OCI-LY7 (cell line): ENCODE measurements at regions of chr2 and their contacts with region 1.

Region 1: DNA sequence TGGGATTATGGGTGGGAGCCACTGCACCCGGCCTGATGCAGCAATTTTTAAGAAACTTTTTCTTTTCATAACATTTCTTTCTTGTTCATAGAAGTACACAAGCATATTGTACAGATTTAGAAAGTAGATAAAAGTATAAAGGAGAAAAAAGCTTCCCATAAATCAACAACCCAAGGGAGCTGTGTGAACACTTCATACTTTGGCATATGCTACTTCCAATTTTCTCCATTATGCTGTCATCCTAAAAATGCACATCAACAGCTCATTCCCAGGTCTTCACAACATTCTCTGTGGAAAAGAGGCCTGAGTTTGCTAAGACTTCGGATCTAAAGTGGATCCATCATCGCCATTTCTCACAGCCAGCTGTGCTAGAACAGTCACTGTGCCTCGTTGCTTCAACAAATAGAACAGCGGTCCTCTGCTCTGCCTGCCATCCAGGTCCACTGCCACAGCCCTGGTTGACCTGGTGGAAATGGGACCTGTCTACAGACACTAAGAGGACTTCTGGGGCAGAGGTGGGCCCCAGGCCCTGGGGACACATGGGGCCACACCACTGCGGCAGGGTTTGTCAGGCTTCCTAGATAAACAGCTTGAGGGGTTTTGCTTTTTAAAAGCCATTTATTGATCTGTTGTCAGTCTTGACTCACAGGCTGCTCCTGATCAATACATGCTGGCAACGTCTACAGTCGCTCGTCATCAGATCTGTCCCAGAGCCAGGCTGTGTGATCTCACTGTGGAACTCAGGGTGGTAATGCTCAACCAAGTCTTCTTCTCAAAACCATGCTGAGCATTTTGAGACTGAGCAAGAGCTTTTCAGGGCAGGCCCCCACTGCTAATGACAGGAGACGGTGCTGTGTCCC is 72.7 kb upstream of the MGAT4A start:
- DNase-seq: no peak
- H3K4me3 ChIP-seq: no peak overlapping the region
- H3K27ac ChIP-seq: no peak overlapping the region
- H3K4me1 ChIP-seq: no peaks in the 10 kb centered on the region
- CTCF ChIP-seq: no peak

Region 2: GRCh38 chr2:98685930-98686887 is 117.4 kb before region 1 on chr2:
- CTCF ChIA-PET with region 1: no interaction called
- POLR2A ChIA-PET with region 1: interaction called, 10 read pairs
- intact Hi-C with region 1: no loop called
- DNase-seq: no peak
- H3K4me3 ChIP-seq: no peak overlapping the region
- H3K27ac ChIP-seq: no peak overlapping the region
- H3K4me1 ChIP-seq: no peaks in the 10 kb centered on the region
- CTCF ChIP-seq: no peak

Region 3: DNA sequence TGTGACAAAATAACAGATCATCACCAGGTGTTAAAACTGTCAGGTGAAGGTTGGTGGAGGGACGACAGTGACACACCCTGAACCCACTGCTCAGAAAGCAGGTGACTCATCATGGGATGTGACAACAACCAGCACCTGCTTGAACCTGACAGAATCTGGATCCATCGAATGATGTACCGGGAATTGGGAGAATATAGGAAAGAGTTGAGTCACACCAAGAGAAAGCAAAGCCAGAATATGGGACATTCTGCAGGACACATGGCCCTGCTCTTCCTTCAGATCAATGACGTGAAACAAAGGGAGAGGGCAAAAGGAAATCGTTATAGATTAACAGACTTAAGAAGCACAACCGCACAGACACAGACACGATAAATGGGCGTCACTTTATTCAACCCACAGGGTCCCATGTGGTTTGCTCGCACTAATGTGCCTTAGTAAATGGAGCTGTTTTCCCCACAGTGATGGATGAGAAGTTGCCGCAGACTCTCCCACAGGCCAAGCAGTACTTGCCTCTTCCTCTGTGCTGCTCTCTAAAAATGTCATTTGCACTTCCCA is 32.3 kb after region 1 on chr2:
- CTCF ChIA-PET with region 1: no interaction called
- POLR2A ChIA-PET with region 1: no interaction called
- intact Hi-C with region 1: no loop called
- DNase-seq: no peak
- H3K4me3 ChIP-seq: no peak overlapping the region
- H3K27ac ChIP-seq: no peak overlapping the region
- H3K4me1 ChIP-seq: peaks cover 13% of the 10 kb centered on the region
- CTCF ChIP-seq: no peak

Region 4: GRCh38 chr2:98923244-98923940 is 119.8 kb after region 1 on chr2:
- CTCF ChIA-PET with region 1: no interaction called
- POLR2A ChIA-PET with region 1: no interaction called
- intact Hi-C with region 1: no loop called
- DNase-seq: no peak
- H3K4me3 ChIP-seq: no peak overlapping the region
- H3K27ac ChIP-seq: no peak overlapping the region
- H3K4me1 ChIP-seq: no peaks in the 10 kb centered on the region
- CTCF ChIP-seq: peak; percentile 69